ENCODE measurements at regions of chr7 and their contacts with region 1.

Region 1: GRCh38 chr7:77657427-77658224 is 38.6 kb upstream of the RSBN1L start:
- DNase-seq: peak; percentile 77
- H3K4me3 ChIP-seq: no peak overlapping the region
- H3K27ac ChIP-seq: no peak overlapping the region
- H3K4me1 ChIP-seq: no peaks in the 10 kb centered on the region
- H3K27me3 ChIP-seq: no peaks in the 10 kb centered on the region
- CTCF ChIP-seq: peak; percentile 65

Region 2: GRCh38 chr7:77439572-77439971 is 218.1 kb before region 1 on chr7:
- CTCF ChIA-PET with region 1: no interaction called
- POLR2A ChIA-PET with region 1: no interaction called
- intact Hi-C with region 1: loop called (anchors 10 kb)
- DNase-seq: peak; percentile 42
- H3K4me3 ChIP-seq: no peak overlapping the region
- H3K27ac ChIP-seq: no peak overlapping the region
- H3K4me1 ChIP-seq: no peaks in the 10 kb centered on the region
- H3K27me3 ChIP-seq: no peaks in the 10 kb centered on the region
- CTCF ChIP-seq: peak; percentile 42

Region 3: GRCh38 chr7:77933394-77933793 is 275.8 kb after region 1 on chr7:
- CTCF ChIA-PET with region 1: no interaction called
- POLR2A ChIA-PET with region 1: no interaction called
- intact Hi-C with region 1: loop called (anchors 5 kb)
- DNase-seq: peak; percentile 44
- H3K4me3 ChIP-seq: no peak overlapping the region
- H3K27ac ChIP-seq: no peak overlapping the region
- H3K4me1 ChIP-seq: no peaks in the 10 kb centered on the region
- H3K27me3 ChIP-seq: no peaks in the 10 kb centered on the region
- CTCF ChIP-seq: no peak